Activated T-helper 1 cell treated with anti-CD3 and anti-CD28 coated beads, Interleukin-12 subunit alpha, Interleukin-12 subunit beta, Interleukin-2, Interleukin-4 antibody, amounts not matched to agents 30 ng/mL and 10 ng/mL and 1 ng/mL, durations not matched to agents 14 hours and 24 hours and 36 hours (primary cell): ENCODE measurements at regions of chr4 and their contacts with region 1.

Region 1: DNA sequence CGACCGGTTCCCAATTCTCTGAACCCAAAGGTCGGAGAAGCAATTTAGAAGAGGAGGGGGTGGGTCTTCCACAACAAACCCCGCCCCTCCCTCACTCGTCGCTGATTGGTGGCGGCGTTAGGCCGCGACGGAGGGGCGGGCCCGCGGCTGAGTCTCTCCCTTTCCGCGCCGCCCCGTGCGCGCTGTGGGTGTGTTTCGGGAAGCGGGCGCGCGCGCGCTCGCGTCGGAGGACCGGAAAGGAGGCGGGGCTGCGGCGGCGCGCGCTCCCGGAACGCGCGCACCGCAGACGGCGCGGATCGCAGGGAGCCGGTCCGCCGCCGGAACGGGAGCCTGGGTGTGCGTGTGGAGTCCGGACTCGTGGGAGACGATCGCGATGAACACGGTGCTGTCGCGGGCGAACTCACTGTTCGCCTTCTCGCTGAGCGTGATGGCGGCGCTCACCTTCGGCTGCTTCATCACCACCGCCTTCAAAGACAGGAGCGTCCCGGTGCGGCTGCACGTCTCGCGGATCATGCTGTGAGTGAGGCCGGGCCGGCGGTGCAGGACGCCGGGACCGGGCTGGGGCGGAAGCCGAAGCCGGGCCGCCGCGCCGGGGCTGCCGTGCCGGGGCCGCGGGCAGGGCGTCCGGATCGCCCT is at the start of gene SPCS3:
- DNase-seq: peak; percentile 92
- H3K4me3 Mint-ChIP-seq: peak within 1 kb of the TSS; percentile 98
- H3K27ac Mint-ChIP-seq: peak within 1 kb of the TSS; percentile 97
- H3K4me1 Mint-ChIP-seq: peaks cover 60% of the 10 kb centered on the region
- H3K27me3 Mint-ChIP-seq: no peaks in the 10 kb centered on the region
- total RNA-seq, gene SPCS3: 197 and 203 TPM in 2 replicates

Region 2: DNA sequence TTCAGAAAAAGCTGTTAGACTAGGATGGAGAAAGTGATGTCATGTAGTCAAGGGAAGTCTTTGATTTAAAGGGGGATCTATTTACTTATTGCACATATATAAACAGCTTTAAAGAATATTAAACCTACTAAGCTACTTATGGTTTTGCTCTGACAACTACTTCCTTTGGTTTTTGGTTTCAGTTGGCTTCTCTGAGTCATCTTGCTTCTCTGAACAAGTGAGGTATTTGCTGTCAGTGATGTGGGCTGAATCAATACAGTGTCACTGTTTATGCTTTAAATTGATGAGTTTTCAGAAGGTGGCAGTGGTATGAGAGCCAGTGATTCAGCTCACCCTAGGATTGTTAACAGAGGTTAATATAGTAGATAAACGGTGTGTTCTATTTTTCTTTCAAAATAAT is 1961.0 kb before region 1 on chr4:
- intact Hi-C with region 1: loop called (anchors 5 kb)
- DNase-seq: peak; percentile 22
- H3K4me3 Mint-ChIP-seq: no peak overlapping the region
- H3K27ac Mint-ChIP-seq: peak overlapping the region; percentile 84
- H3K4me1 Mint-ChIP-seq: peaks cover 26% of the 10 kb centered on the region
- H3K27me3 Mint-ChIP-seq: peaks cover 13% of the 10 kb centered on the region

Region 3: GRCh38 chr4:176065435-176066291 is 254.2 kb before region 1 on chr4 and contains the start of gene WDR17:
- intact Hi-C with region 1: loop called (anchors 1 kb)
- DNase-seq: peak; percentile 65
- H3K4me3 Mint-ChIP-seq: peak within 1 kb of the TSS; percentile 89
- H3K27ac Mint-ChIP-seq: peak within 1 kb of the TSS; percentile 69
- H3K4me1 Mint-ChIP-seq: peaks cover 13% of the 10 kb centered on the region
- H3K27me3 Mint-ChIP-seq: peaks cover 15% of the 10 kb centered on the region
- total RNA-seq, gene WDR17: 1.5 and 1.6 TPM in 2 replicates

Region 4: GRCh38 chr4:176195184-176195978 is 124.4 kb before region 1 on chr4 and contains the start of gene SPATA4:
- intact Hi-C with region 1: loop called (anchors 1 kb)
- DNase-seq: peak; percentile 88
- H3K4me3 Mint-ChIP-seq: peak within 1 kb of the TSS; percentile 70
- H3K27ac Mint-ChIP-seq: peak within 1 kb of the TSS; percentile 72
- H3K4me1 Mint-ChIP-seq: peaks cover 22% of the 10 kb centered on the region
- H3K27me3 Mint-ChIP-seq: peaks cover 33% of the 10 kb centered on the region
- total RNA-seq, gene SPATA4: not detected in 2 replicates

Region 5: GRCh38 chr4:176902710-176903323 is 583.0 kb after region 1 on chr4:
- intact Hi-C with region 1: loop called (anchors 5 kb)
- DNase-seq: no peak
- H3K4me3 Mint-ChIP-seq: no peak overlapping the region
- H3K27ac Mint-ChIP-seq: peak overlapping the region; percentile 29
- H3K4me1 Mint-ChIP-seq: peaks cover 13% of the 10 kb centered on the region
- H3K27me3 Mint-ChIP-seq: peaks cover 3% of the 10 kb centered on the region